Psoas muscle (tissue), 8 donors: ENCODE measurements at regions of chrX and their contacts with region 1.

Region 1: GRCh38 chrX:123960042-123960611 is 1.4 kb upstream of the STAG2 start:
- DNase-seq: peak; percentile 89 to 94
- ATAC-seq: peak; percentile 76 to 87 (median 83)
- H3K4me3 ChIP-seq: peak overlapping the region; percentile 80
- H3K27ac ChIP-seq: peak overlapping the region; percentile 95
- H3K4me1 ChIP-seq: peaks cover 7% of the 10 kb centered on the region
- H3K27me3 ChIP-seq: no peaks in the 10 kb centered on the region
- CTCF ChIP-seq: peak; percentile 83

Region 2: DNA sequence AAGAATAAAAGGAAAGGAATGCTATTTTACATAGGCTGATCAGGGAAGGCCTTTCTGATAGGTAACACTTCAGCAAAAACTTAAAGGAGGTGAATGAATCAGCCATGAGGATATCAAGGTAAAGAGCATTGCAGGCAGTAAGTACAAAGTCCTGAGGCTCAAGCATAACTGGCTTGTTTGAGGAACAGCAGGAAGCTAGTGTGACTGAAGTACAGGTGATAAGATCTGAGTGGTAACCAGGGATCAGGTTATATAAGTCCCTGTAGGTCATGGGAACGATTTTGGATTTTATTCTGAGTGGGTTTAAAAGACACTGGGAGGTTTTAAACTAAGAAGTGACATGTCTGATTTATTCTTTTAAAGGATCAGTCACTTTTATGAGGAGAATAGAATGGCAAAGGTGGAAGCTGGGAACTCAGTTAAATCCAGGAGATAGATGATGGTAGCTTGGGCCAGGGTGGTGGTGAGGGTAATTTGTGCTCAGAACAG is 180.2 kb before region 1 on chrX:
- intact Hi-C with region 1: no loop called
- DNase-seq: no peak
- ATAC-seq: no peak
- H3K4me3 ChIP-seq: no peak overlapping the region
- H3K27ac ChIP-seq: no peak overlapping the region
- H3K4me1 ChIP-seq: no peaks in the 10 kb centered on the region
- H3K27me3 ChIP-seq: no peaks in the 10 kb centered on the region
- CTCF ChIP-seq: no peak

Region 3: GRCh38 chrX:123833387-123833786 is 126.7 kb before region 1 on chrX:
- intact Hi-C with region 1: loop called in 1 of 2 experiments (anchors 10 kb)
- DNase-seq: no peak
- ATAC-seq: peak; percentile 81 to 90 (median 84)
- H3K4me3 ChIP-seq: no peak overlapping the region
- H3K27ac ChIP-seq: no peak overlapping the region
- H3K4me1 ChIP-seq: no peaks in the 10 kb centered on the region
- H3K27me3 ChIP-seq: no peaks in the 10 kb centered on the region
- CTCF ChIP-seq: peak; percentile 83

Region 4: GRCh38 chrX:123859846-123860838 is 100.0 kb before region 1 on chrX and contains the start of gene XIAP:
- intact Hi-C with region 1: loop called in 1 of 2 experiments (anchors 1 kb)
- DNase-seq: peak; percentile 83 to 93
- ATAC-seq: peak; percentile 93 to 95 (median 95)
- H3K4me3 ChIP-seq: peak within 1 kb of the TSS; percentile 69
- H3K27ac ChIP-seq: peak within 1 kb of the TSS; percentile 96
- H3K4me1 ChIP-seq: no peaks in the 10 kb centered on the region
- H3K27me3 ChIP-seq: no peaks in the 10 kb centered on the region
- CTCF ChIP-seq: no peak
- total RNA-seq, gene XIAP: 34.8 to 40.1 (median 37.6) TPM

Region 5: DNA sequence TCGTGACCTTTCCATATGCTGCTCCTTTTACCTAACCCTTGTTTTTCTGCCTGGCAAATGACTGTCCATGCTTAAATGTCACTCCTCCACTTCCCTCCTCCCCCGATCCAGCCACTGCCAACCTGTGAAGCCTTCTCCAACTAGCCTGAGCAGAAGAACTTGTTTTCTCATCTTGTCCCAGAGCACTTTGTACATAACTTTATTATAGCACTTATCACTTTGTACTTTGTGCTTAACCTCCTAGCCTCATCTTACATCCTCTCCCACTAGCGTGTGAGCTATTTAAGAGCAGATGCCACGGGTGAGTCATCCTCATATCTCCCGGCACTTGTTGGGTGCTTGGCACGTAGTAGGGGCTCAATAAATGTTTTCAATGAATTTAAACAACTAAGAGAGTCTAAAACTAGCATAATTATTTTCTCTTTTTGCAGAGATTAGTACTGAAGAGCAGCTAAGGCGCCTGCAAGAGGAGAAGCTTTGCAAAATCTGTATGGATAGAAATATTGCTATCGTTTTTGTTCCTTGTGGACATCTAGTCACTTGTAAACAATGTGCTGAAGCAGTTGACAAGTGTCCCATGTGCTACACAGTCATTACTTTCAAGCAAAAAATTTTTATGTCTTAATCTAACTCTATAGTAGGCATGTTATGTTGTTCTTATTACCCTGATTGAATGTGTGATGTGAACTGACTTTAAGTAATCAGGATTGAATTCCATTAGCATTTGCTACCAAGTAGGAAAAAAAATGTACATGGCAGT is 53.4 kb before region 1 on chrX:
- intact Hi-C with region 1: no loop called
- DNase-seq: peak in 1 of 2 donors; percentile 58
- ATAC-seq: peak; percentile 37 to 90 (median 80)
- H3K4me3 ChIP-seq: no peak overlapping the region
- H3K27ac ChIP-seq: peak overlapping the region; percentile 31
- H3K4me1 ChIP-seq: no peaks in the 10 kb centered on the region
- H3K27me3 ChIP-seq: no peaks in the 10 kb centered on the region
- CTCF ChIP-seq: no peak

Region 6: GRCh38 chrX:123976706-123977316 is 16.7 kb after region 1 on chrX:
- intact Hi-C with region 1: loop called in 1 of 2 experiments (anchors 1 kb)
- DNase-seq: no peak
- ATAC-seq: peak in 3 of 4 donors; percentile 62 to 80 (median 74)
- H3K4me3 ChIP-seq: no peak overlapping the region
- H3K27ac ChIP-seq: peak overlapping the region; percentile 36
- H3K4me1 ChIP-seq: peaks cover 7% of the 10 kb centered on the region
- H3K27me3 ChIP-seq: no peaks in the 10 kb centered on the region
- CTCF ChIP-seq: peak; percentile 29

Region 7: DNA sequence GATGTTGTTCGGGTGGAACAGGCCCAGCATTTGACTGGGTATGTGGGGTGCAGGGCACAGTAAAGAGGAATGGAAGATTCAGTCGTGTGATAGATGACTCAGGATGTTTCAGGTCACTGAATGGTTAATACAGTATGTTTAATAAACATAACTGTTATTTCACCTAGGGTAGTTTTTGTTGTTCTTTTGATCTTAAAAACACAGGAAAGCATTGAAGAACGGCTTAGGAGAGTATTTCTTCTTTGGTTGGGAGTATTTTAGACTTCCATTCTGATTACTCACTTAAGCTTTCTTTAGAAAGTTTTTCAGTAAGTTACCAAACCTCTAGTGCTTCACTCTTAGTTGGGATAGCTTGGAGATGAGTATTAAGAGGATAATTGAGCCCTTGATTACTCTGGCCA is 63.7 kb after region 1 on chrX:
- intact Hi-C with region 1: loop called in 1 of 2 experiments (anchors 5 kb)
- DNase-seq: no peak
- ATAC-seq: peak in 3 of 4 donors; percentile 67 to 83 (median 75)
- H3K4me3 ChIP-seq: no peak overlapping the region
- H3K27ac ChIP-seq: no peak overlapping the region
- H3K4me1 ChIP-seq: peaks cover 6% of the 10 kb centered on the region
- H3K27me3 ChIP-seq: no peaks in the 10 kb centered on the region
- CTCF ChIP-seq: no peak

Region 8: DNA sequence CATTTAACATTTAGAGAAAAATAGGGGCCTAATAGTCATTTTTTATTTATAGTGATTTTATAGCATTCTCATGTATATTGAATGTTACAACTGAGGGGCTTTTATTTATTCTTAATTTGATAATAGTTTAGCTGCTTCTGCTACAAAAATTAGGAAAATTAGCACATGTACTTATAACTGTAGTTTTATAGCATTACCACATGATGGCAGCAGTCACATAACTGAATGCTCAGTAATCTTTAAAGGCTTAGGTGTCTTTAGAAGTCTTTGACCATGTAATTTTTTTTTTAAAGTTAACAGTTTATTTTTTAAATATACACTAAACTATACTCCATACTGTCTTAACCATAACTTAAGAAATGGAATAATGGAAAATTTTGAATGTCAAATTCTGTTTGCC is 138.0 kb after region 1 on chrX:
- intact Hi-C with region 1: loop called in 1 of 2 experiments (anchors 5 kb)
- DNase-seq: no peak
- ATAC-seq: peak in 3 of 4 donors; percentile 27 to 81 (median 74)
- H3K4me3 ChIP-seq: no peak overlapping the region
- H3K27ac ChIP-seq: no peak overlapping the region
- H3K4me1 ChIP-seq: no peaks in the 10 kb centered on the region
- H3K27me3 ChIP-seq: no peaks in the 10 kb centered on the region
- CTCF ChIP-seq: peak; percentile 71

Region 9: GRCh38 chrX:124594017-124594651 is 634.0 kb after region 1 on chrX:
- intact Hi-C with region 1: no loop called
- DNase-seq: no peak
- ATAC-seq: no peak
- H3K4me3 ChIP-seq: no peak overlapping the region
- H3K27ac ChIP-seq: no peak overlapping the region
- H3K4me1 ChIP-seq: no peaks in the 10 kb centered on the region
- H3K27me3 ChIP-seq: no peaks in the 10 kb centered on the region
- CTCF ChIP-seq: no peak